ENCODE measurements at regions of chr1 and their contacts with region 1.

Region 1: DNA sequence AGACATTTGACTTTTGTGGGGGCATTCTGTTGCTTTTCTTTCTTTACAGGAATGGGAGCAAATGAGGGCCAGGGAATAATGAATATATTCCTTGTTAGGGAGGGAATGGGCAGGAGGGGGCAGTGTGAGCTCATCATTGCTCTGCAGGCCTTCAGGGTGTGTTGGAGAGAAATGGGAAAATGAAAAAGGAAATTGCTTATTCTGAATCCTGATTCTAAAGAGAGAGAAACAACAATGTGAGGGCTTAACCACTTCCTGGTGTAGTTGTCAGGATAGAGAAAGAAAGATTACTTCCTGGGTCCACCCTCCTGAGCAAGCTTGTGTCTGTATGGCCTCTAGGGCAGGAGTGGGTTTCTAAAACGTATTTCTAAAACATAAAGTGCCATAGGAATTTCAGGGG is 28.3 kb downstream of the VANGL2 start:
- DNase-seq: peak; percentile 55 to 64
- ATAC-seq: peak; percentile 71 to 94; a peak in 5 of 6 replicates
- H3K4me3 ChIP-seq: no peak overlapping the region
- H3K27ac ChIP-seq: 0 out of 6 replicates have a peak overlapping the region, but pooled peaks of 1 of the 2 experiments have one; percentile 30
- H3K4me1 ChIP-seq: no peaks in the 10 kb centered on the region
- CTCF ChIP-seq: peak; percentile 90
- EP300 ChIP-seq: no peak
- POLR2A ChIP-seq: no peak
- RAD21 ChIP-seq: peak; percentile 95 to 97

Region 2: DNA sequence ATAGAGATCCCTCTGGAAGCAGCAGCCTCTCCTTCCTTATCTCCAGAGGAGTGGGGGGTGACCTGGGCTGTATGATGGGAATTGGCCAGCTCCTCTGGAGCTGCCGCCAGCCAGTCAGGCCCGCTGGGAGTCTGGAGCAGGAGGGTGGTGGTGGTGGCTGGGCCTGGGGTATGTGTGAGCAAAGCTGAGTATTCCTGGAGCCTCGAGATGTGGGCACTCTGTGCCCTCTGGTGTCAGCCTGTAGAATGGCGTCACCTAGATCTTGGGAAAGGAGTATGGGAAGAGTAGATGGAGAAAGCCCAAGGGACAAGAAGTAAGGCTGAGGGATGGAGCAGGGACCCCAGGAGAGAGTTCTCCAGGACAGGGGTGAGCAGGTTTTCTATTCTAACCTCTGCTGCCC is 12.3 kb before region 1 on chr1:
- CTCF ChIA-PET with region 1: interaction called, 11 read pairs
- POLR2A ChIA-PET with region 1: no interaction called
- DNase-seq: peak; percentile 55 to 59
- ATAC-seq: peak; percentile 92 to 97
- H3K4me3 ChIP-seq: no peak overlapping the region
- H3K27ac ChIP-seq: no peak overlapping the region
- H3K4me1 ChIP-seq: no peaks in the 10 kb centered on the region
- CTCF ChIP-seq: peak; percentile 50
- EP300 ChIP-seq: no peak
- POLR2A ChIP-seq: no peak
- RAD21 ChIP-seq: peak; percentile 66 to 73

Region 3: DNA sequence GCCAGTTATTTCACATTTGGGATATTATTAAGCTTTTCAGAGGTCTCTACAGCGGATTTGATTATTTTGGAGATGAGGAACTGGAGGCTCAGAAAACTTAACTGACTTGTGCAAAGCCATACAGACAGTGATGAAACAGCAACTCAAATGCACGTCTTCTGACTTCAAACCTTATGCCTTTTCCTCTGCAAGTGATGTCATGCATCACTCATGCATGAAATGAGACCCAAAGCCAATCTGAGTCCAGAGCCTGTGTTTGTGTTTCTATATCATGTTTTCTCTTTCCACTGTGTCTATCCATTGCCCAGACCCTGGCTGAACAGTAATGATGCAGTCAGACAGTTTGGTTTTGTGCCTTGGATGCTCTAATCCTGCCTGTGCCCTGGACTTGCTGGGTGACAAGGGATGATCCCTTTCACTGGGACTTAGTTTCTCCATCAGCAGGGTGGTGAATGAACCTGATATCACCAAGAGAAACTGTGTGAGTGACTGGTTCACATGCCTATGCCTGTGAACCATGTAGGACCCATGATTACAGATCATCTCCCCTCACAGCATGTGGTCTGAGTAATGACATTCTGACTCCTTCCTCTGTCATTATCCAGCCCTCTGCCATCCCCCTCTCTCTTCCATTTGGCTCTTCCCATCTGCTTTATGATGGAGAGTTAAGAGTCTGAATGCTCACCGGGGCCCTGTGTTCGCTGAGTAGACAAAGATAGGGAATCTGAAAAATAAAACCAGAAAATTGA is 61.0 kb after region 1 on chr1:
- CTCF ChIA-PET with region 1: no interaction called
- POLR2A ChIA-PET with region 1: no interaction called
- DNase-seq: no peak
- ATAC-seq: no peak
- H3K4me3 ChIP-seq: no peak overlapping the region
- H3K27ac ChIP-seq: no peak overlapping the region
- H3K4me1 ChIP-seq: no peaks in the 10 kb centered on the region
- CTCF ChIP-seq: no peak
- EP300 ChIP-seq: no peak
- POLR2A ChIP-seq: no peak
- RAD21 ChIP-seq: no peak

Measured in A549 (cell line).